ENCODE measurements at regions of chr1 and their contacts with region 1.

Region 1: DNA sequence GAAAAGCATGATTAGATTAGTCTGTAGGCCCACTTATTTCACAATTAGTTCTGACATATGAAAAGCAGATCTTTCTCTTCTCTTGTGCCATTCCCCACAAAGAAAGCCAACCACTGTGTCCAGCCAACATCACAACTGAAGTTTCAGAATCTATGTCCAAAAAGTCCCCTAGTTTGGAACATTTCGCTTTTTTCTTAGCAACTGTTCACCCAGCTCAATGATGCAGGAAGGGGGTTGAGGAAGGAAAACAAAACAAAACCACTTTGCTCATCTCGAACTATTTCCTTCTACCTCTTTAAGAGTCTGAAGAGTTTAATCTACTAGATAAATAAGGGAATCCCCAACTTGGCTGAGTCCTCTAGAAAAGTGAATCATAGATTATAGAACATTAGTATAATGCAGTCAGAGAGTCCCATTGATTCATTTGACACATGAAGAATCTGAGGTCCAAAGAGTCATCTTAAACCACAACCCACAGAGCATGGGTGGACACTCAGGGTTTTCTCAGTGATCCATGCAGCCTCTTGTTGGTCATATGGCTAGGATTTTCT is 159.3 kb upstream of the SGIP1 start:
- DNase-seq: no peak
- H3K4me3 ChIP-seq: no peak overlapping the region
- H3K27ac ChIP-seq: peak overlapping the region in 1 of 5 donors; percentile 36
- H3K4me1 ChIP-seq: peaks cover 0 to 17% of the 10 kb centered on the region in 2 donors
- H3K27me3 ChIP-seq: no peaks in the 10 kb centered on the region
- CTCF ChIP-seq: no peak
- POLR2A ChIP-seq: no peak

Region 2: DNA sequence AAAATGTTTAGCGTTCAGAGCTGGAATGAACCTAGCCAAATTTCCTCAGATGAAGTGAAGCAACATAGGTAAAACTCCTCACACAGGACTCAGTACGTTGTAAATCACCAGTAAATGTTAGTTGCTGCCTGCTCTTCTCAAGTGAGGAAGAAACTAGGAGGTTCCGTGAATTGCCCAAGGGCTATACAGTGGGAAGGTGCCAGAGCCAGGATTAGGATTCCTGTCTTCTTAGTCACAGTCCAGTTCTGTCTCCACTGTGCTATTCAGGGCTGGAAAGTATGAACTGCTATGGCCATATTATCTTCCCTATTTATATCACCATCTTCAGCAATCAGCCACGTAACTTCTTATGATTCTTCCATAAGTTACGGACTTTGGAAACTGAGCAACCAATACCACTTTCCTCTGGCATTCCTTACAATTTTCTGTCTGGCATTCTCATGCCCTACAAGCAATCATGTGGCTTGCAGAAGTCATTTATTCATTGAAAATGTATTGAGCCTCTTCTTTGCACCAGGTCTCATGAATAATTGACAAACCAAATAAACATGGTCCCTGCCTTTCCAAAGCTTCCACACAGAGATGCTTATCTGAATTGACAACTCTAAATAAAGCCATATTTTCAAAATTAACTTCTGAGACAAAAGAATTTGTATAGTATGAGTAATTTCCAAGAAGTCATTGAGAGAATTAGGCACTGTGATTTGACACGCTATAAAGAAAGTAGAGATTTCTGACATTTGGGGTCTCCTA is 112.2 kb before region 1 on chr1:
- intact Hi-C with region 1: loop called in 1 of 2 experiments (anchors 10 kb)
- DNase-seq: no peak
- H3K4me3 ChIP-seq: no peak overlapping the region
- H3K27ac ChIP-seq: no peak overlapping the region
- H3K4me1 ChIP-seq: peaks cover 3 to 4% of the 10 kb centered on the region in 2 donors
- H3K27me3 ChIP-seq: no peaks in the 10 kb centered on the region
- CTCF ChIP-seq: no peak
- POLR2A ChIP-seq: no peak